Activated T-helper 1 cell treated with anti-CD3 and anti-CD28 coated beads, Interleukin-12 subunit alpha, Interleukin-12 subunit beta, Interleukin-2, Interleukin-4 antibody, amounts not matched to agents 30 ng/mL and 10 ng/mL and 1 ng/mL, durations not matched to agents 14 hours and 24 hours and 36 hours (primary cell): ENCODE measurements at regions of chr1 and their contacts with region 1.

Region 1: GRCh38 chr1:19341201-19342072 is 29.3 kb downstream of the SLC66A1 start:
- DNase-seq: peak; percentile 59
- H3K4me3 Mint-ChIP-seq: no peak overlapping the region
- H3K27ac Mint-ChIP-seq: peak overlapping the region; percentile 34
- H3K4me1 Mint-ChIP-seq: peaks cover 9% of the 10 kb centered on the region
- H3K27me3 Mint-ChIP-seq: no peaks in the 10 kb centered on the region

Region 2: DNA sequence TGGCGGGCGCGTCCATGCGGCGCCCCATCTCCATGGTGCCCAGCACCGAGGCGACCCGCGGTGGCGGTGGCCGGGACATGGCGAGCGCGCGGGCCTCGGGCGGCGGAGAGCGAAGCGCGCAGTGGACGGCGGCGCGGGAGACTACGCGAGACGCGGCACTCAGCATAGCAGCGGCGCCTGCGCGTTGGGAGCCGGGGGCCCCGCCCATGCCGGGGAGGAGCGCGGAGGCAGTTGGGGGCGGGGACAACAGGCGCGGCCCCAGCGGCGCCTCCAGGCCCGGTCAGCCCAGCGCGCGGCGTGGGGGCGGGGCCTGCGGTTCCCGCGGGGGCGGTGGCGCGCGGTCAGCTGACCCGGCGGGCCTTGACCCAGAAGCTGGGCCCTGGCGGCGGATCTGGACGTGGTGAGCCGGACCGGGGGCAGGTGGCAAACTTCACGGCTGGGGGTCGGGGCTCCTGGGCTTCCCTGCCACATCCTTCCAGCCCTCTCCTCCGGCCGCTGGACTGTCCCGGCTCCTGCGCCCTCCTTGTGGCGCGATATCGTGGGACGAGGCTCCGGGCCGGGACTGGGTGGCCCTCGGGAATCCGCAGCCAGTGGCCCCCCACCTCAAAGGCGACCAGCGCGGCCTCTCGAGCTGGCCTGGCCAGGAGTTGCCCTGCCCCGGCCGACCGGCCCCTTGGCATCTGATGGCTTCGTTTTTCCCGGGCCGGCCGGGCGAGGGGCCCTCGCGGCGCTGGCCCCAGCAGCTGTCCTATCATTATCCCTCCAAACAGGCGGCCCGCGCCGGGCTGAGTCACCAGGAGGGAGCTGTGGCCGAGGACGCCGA is 29.3 kb before region 1 on chr1 and contains the starts of genes AKR7A2 and SLC66A1:
- intact Hi-C with region 1: loop called (anchors 1 kb)
- DNase-seq: peak; percentile 93
- H3K4me3 Mint-ChIP-seq: peak within 1 kb of the TSS; percentile 91
- H3K27ac Mint-ChIP-seq: peak within 1 kb of the TSS; percentile 87
- H3K4me1 Mint-ChIP-seq: peaks cover 30% of the 10 kb centered on the region
- H3K27me3 Mint-ChIP-seq: no peaks in the 10 kb centered on the region
- total RNA-seq, gene AKR7A2: 30.0 and 31.1 TPM in 2 replicates
- total RNA-seq, gene SLC66A1: 9.9 and 12.0 TPM in 2 replicates

Region 3: GRCh38 chr1:19536519-19536918 is 195.1 kb after region 1 on chr1:
- intact Hi-C with region 1: no loop called
- DNase-seq: no peak
- H3K4me3 Mint-ChIP-seq: no peak overlapping the region
- H3K27ac Mint-ChIP-seq: no peak overlapping the region
- H3K4me1 Mint-ChIP-seq: no peaks in the 10 kb centered on the region
- H3K27me3 Mint-ChIP-seq: no peaks in the 10 kb centered on the region

Region 4: GRCh38 chr1:19582302-19582701 is 240.9 kb after region 1 on chr1:
- intact Hi-C with region 1: loop called (anchors 1 kb)
- DNase-seq: peak; percentile 54
- H3K4me3 Mint-ChIP-seq: no peak overlapping the region
- H3K27ac Mint-ChIP-seq: peak overlapping the region; percentile 25
- H3K4me1 Mint-ChIP-seq: peaks cover 7% of the 10 kb centered on the region
- H3K27me3 Mint-ChIP-seq: peaks cover 24% of the 10 kb centered on the region

Region 5: GRCh38 chr1:19616489-19616888 is 275.1 kb after region 1 on chr1:
- intact Hi-C with region 1: no loop called
- DNase-seq: no peak
- H3K4me3 Mint-ChIP-seq: no peak overlapping the region
- H3K27ac Mint-ChIP-seq: no peak overlapping the region
- H3K4me1 Mint-ChIP-seq: peaks cover 16% of the 10 kb centered on the region
- H3K27me3 Mint-ChIP-seq: no peaks in the 10 kb centered on the region

Region 6: GRCh38 chr1:19651141-19651737 is 309.8 kb after region 1 on chr1:
- intact Hi-C with region 1: loop called (anchors 1 kb)
- DNase-seq: no peak
- H3K4me3 Mint-ChIP-seq: no peak overlapping the region
- H3K27ac Mint-ChIP-seq: no peak overlapping the region
- H3K4me1 Mint-ChIP-seq: peaks cover 27% of the 10 kb centered on the region
- H3K27me3 Mint-ChIP-seq: no peaks in the 10 kb centered on the region

Region 7: GRCh38 chr1:19949016-19949415 is 607.6 kb after region 1 on chr1:
- intact Hi-C with region 1: no loop called
- DNase-seq: no peak
- H3K4me3 Mint-ChIP-seq: no peak overlapping the region
- H3K27ac Mint-ChIP-seq: no peak overlapping the region
- H3K4me1 Mint-ChIP-seq: no peaks in the 10 kb centered on the region
- H3K27me3 Mint-ChIP-seq: peaks cover 12% of the 10 kb centered on the region